CD4-positive, alpha-beta memory T cell (primary cell): ENCODE measurements at regions of chr17 and their contacts with region 1.

Region 1: GRCh38 chr17:76141212-76142038 is at the start of gene FOXJ1:
- DNase-seq: peak; percentile 90 to 93 (median 92)
- H3K4me3 ChIP-seq: peak within 1 kb of the TSS; percentile 19 to 48
- H3K4me3 Mint-ChIP-seq: peak within 1 kb of the TSS; percentile 75 to 94 (median 84)
- H3K27ac ChIP-seq: no peak within 1 kb of the TSS
- H3K27ac Mint-ChIP-seq: peak within 1 kb of the TSS; percentile 78 to 96 (median 85)
- H3K4me1 ChIP-seq: peaks cover 66% of the 10 kb centered on the region
- H3K4me1 Mint-ChIP-seq: peaks cover 39 to 63% (median 50%) of the 10 kb centered on the region in 4 donors
- H3K27me3 ChIP-seq: peaks cover 4% of the 10 kb centered on the region
- H3K27me3 Mint-ChIP-seq: peaks cover 3% of the 10 kb centered on the region in 2 donors
- total RNA-seq, gene FOXJ1: 0.19 to 0.20 TPM

Region 2: DNA sequence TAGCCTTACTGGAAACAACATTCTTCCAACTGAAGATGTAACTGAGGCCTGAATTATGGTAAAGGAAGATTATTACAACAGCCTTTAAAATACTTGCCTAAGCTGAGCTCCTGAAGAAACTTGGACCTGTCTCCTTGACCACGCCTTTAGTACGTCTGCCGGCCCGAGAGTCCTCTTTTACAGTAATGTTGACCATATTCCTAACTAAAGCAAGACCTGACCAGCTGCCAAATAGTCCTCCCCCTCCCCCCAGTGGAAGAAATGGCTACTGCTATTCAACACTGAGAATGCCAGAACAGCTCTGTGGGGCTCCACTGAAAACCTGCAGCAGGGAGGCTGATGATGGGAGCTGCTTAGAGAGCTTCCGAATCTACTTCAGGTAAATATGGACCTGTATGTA is 12.2 kb after region 1 on chr17:
- CTCF ChIA-PET with region 1: interaction called, 5 read pairs
- POLR2A ChIA-PET with region 1: interaction called, 68 read pairs
- intact Hi-C with region 1: no loop called
- DNase-seq: no peak
- H3K4me3 ChIP-seq: no peak overlapping the region
- H3K4me3 Mint-ChIP-seq: no peak overlapping the region
- H3K27ac ChIP-seq: no peak overlapping the region
- H3K27ac Mint-ChIP-seq: peak overlapping the region in 6 of 7 donors; percentile 22 to 79 (median 65)
- H3K4me1 ChIP-seq: peaks cover 24% of the 10 kb centered on the region
- H3K4me1 Mint-ChIP-seq: peaks cover 29 to 49% (median 35%) of the 10 kb centered on the region in 4 donors
- H3K27me3 ChIP-seq: no peaks in the 10 kb centered on the region
- H3K27me3 Mint-ChIP-seq: no peaks in the 10 kb centered on the region